B cell (primary cell): ENCODE measurements at regions of chr1 and their contacts with region 1.

Region 1: GRCh38 chr1:25810341-25811299 is 9.1 kb upstream of the MTFR1L start:
- DNase-seq: peak; percentile 84
- ATAC-seq: peak; percentile 89
- H3K4me3 ChIP-seq: no peak overlapping the region
- H3K4me3 Mint-ChIP-seq: no peak overlapping the region
- H3K27ac ChIP-seq: no peak overlapping the region
- H3K27ac Mint-ChIP-seq: no peak overlapping the region
- H3K4me1 ChIP-seq: peaks cover 11 to 23% of the 10 kb centered on the region in 2 donors
- H3K4me1 Mint-ChIP-seq: peaks cover 17% of the 10 kb centered on the region
- H3K27me3 ChIP-seq: no peaks in the 10 kb centered on the region
- H3K27me3 Mint-ChIP-seq: no peaks in the 10 kb centered on the region
- CTCF ChIP-seq: peak; percentile 96

Region 2: GRCh38 chr1:25503551-25504426 is 306.8 kb before region 1 on chr1:
- CTCF ChIA-PET with region 1: interaction called, 59 read pairs
- POLR2A ChIA-PET with region 1: no interaction called
- intact Hi-C with region 1: no loop called
- DNase-seq: peak; percentile 54
- ATAC-seq: peak; percentile 61
- H3K4me3 ChIP-seq: no peak overlapping the region
- H3K4me3 Mint-ChIP-seq: no peak overlapping the region
- H3K27ac ChIP-seq: no peak overlapping the region
- H3K27ac Mint-ChIP-seq: no peak overlapping the region
- H3K4me1 ChIP-seq: peaks cover 6 to 10% of the 10 kb centered on the region in 2 donors
- H3K4me1 Mint-ChIP-seq: peaks cover 10% of the 10 kb centered on the region
- H3K27me3 ChIP-seq: no peaks in the 10 kb centered on the region
- H3K27me3 Mint-ChIP-seq: peaks cover 3% of the 10 kb centered on the region
- CTCF ChIP-seq: peak; percentile 59

Region 3: GRCh38 chr1:25520446-25521061 is 290.1 kb before region 1 on chr1:
- CTCF ChIA-PET with region 1: interaction called, 49 read pairs
- POLR2A ChIA-PET with region 1: no interaction called
- intact Hi-C with region 1: no loop called
- DNase-seq: peak; percentile 71
- ATAC-seq: peak; percentile 45
- H3K4me3 ChIP-seq: no peak overlapping the region
- H3K4me3 Mint-ChIP-seq: no peak overlapping the region
- H3K27ac ChIP-seq: no peak overlapping the region
- H3K27ac Mint-ChIP-seq: no peak overlapping the region
- H3K4me1 ChIP-seq: no peaks in the 10 kb centered on the region
- H3K4me1 Mint-ChIP-seq: no peaks in the 10 kb centered on the region
- H3K27me3 ChIP-seq: peaks cover 0 to 5% (median 0%) of the 10 kb centered on the region in 4 experiments
- H3K27me3 Mint-ChIP-seq: peaks cover 9% of the 10 kb centered on the region
- CTCF ChIP-seq: peak; percentile 86

Region 4: DNA sequence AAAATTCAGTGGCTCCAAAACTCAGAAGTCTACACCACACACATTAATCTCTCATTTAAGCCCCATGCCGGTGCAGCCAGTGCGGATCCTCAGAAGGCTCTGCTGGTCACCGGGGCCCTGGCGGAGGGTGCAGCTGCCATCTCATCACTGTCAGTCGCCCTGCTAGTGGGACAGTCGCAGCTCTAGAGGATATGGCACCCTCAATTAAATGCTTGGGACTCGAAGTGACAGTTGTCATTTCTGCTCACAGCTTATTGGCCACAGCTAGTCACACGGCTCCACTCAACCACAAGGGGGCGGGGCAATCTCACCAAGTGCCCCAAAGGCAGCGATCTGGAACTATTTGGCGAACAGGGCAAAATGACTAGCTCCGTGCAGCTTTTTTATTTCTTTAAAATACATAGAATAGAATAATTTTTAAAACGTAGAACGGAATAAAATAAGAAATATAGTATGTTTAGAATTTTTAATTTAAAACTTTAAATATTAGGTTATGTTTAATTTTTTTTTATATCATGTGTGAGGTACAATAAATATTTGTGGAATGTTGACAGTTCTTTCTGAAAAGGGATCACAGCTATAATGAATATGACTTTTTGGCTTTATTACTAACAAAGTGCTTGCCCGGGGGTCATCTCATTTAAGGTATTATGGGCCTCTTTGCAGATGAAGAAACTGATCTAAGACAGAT is 202.0 kb before region 1 on chr1:
- CTCF ChIA-PET with region 1: interaction called, 34 read pairs
- POLR2A ChIA-PET with region 1: no interaction called
- intact Hi-C with region 1: no loop called
- DNase-seq: peak; percentile 86
- ATAC-seq: peak; percentile 100
- H3K4me3 ChIP-seq: peak overlapping the region in 1 of 5 experiments; percentile 39
- H3K4me3 Mint-ChIP-seq: peak overlapping the region; percentile 2
- H3K27ac ChIP-seq: no peak overlapping the region
- H3K27ac Mint-ChIP-seq: no peak overlapping the region
- H3K4me1 ChIP-seq: peaks cover 0 to 5% of the 10 kb centered on the region in 2 donors
- H3K4me1 Mint-ChIP-seq: peaks cover 8% of the 10 kb centered on the region
- H3K27me3 ChIP-seq: peaks cover 0 to 19% (median 11%) of the 10 kb centered on the region in 4 experiments
- H3K27me3 Mint-ChIP-seq: peaks cover 37% of the 10 kb centered on the region
- CTCF ChIP-seq: no peak